GM13976 (cell line): ENCODE measurements at regions of chr10 and their contacts with region 1.

Region 1: DNA sequence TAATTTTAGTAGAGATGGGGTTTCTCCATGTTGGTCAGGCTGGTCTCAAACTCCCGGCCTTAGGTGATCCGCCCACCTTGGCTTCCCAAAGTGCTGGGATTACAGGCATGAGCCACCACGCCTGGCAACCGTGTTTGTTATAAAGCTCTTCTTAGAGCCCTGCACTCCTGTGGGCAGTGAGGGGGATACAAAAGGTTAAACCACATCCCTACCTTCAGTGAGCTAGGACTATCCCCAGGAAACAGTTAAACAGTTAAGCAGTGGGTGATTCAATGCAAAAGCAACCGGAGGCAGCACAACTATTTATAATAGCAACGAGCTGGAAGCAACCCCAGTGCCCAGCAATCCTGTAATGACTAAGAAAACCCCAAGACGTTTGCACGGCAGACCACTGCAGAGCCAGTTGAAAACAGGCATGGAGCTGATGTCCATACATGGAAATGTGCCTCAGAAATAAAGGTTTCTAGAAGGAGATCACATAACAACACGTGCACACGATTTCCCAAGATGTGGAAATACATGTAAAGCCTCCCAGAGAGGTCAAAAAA is 107.2 kb upstream of the LYZL2 start:
- DNase-seq: peak; percentile 62
- CTCF ChIP-seq: no peak

Region 2: GRCh38 chr10:31808258-31809218 is 1071.8 kb after region 1 on chr10:
- in situ Hi-C with region 1: loop called (anchors 25 kb)
- DNase-seq: peak; percentile 28
- CTCF ChIP-seq: no peak